OCI-LY7 (cell line): ENCODE measurements at regions of chr10 and their contacts with region 1.

Region 1: DNA sequence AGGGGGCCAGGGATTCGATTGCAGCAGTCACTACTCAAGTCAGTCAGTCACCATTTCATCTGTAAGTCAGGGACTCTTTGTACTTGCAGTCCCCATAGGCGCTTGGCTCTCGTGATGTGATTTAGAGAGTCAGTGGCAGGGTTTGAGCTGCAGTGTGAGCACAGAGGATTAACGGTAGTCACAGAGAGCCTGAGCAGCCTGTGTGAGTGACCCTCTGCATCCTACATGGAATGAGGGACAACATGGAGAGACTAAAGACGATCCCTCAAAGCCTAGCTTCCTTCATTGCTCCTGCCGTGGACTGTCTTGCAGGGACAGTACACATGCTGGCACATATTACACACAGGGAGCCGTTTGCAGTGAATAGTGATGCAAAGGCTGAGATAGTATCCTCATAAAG is 56.3 kb downstream of the PRPF18 start:
- DNase-seq: no peak
- H3K4me3 ChIP-seq: no peak overlapping the region
- H3K27ac ChIP-seq: no peak overlapping the region
- H3K4me1 ChIP-seq: no peaks in the 10 kb centered on the region
- CTCF ChIP-seq: no peak

Region 2: DNA sequence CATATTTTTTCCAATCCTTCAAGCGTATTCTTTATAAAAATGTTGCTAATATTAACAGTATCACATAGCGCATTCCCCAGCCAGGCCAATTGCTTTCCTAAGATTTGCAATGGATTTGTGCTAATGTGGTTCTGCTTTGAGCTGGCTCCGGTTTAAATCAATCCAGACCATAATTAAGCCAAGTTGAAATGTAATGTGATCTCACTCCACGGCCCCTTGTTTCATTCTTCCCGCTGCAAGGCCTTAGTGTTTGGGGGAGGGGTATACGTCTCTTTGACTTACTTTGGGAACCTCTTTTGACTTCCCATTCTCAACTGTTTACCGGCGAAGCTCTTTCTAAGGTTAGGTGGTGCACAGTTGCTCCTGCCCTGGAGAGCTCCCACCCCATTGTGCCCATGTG is 30.1 kb after region 1 on chr10:
- CTCF ChIA-PET with region 1: no interaction called
- POLR2A ChIA-PET with region 1: no interaction called
- intact Hi-C with region 1: loop called (anchors 2 kb)
- DNase-seq: no peak
- H3K4me3 ChIP-seq: no peak overlapping the region
- H3K27ac ChIP-seq: no peak overlapping the region
- H3K4me1 ChIP-seq: no peaks in the 10 kb centered on the region
- CTCF ChIP-seq: no peak

Region 3: DNA sequence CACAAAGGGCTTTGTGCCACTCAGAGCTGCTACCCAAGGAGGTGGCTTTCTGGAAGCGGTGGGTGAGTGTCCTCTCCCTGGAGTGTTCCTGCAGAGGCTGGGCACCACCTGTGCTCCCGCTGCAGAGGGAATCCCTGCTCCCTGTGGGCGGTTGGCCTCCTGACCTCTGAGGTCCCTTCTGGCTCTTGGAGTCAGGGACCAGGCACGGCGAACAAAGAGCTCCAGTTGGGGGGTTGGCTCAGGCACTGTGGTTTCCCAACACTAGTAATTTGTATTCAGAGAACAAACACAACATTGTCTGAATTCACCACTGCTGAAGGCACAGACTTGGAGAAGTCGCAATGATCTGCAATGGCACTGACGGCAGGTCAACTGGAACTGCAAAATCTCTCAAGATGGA is 272.7 kb after region 1 on chr10:
- CTCF ChIA-PET with region 1: no interaction called
- POLR2A ChIA-PET with region 1: no interaction called
- intact Hi-C with region 1: no loop called
- DNase-seq: no peak
- H3K4me3 ChIP-seq: no peak overlapping the region
- H3K27ac ChIP-seq: no peak overlapping the region
- H3K4me1 ChIP-seq: no peaks in the 10 kb centered on the region
- CTCF ChIP-seq: no peak